T-cell (primary cell): ENCODE measurements at regions of chr19 and their contacts with region 1.

Region 1: DNA sequence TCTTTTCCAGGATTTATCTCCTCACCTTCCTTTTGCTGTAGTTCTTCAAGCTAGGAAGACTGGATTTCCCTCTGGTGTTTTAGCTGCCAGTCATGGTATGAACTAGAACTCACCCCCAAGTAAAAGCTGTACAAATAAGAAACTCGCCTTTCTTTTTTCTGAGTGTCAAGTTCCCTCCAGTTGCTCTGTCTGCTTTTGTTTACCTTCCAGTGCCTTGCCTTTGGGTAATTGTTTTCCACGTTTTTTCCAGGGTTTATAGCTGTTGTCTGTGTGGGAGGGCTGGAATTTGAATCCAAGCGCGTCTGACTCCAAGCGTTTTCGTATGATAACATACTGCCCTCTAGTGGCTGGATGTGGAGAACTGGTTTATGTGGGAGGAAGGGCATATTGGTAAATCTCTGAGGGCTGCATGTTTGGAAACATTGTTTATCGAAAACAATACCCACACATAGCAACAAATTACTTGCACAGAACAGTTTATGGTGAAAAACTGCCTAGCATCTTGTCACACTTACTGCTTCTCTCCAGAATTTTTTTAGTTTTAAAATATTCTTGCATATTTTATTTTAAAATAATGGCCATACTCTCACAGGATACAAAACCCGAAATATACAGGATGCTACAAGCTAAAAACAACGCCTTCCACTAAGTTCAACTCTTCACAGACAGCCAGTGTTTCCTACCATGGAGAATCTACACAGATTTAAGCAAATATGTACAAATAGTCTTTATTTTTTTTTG is 19.2 kb downstream of the RCN3 start:
- DNase-seq: peak in 24 of 35 experiments; percentile 34 to 91 (median 56)
- ATAC-seq: peak; percentile 68 to 79 (median 71)
- H3K4me3 ChIP-seq: peak overlapping the region; percentile 20 to 51
- H3K4me3 Mint-ChIP-seq: peak overlapping the region; percentile 62 to 78 (median 69)
- H3K27ac ChIP-seq: peak overlapping the region; percentile 6
- H3K27ac Mint-ChIP-seq: peak overlapping the region; percentile 82 to 86
- H3K4me1 ChIP-seq: peaks cover 34 to 62% of the 10 kb centered on the region in 2 experiments
- H3K4me1 Mint-ChIP-seq: peaks cover 42 to 54% (median 45%) of the 10 kb centered on the region in 3 donors
- H3K27me3 ChIP-seq: no peaks in the 10 kb centered on the region
- H3K27me3 Mint-ChIP-seq: no peaks in the 10 kb centered on the region

Region 2: GRCh38 chr19:49430678-49431329 is 116.2 kb before region 1 on chr19:
- CTCF ChIA-PET with region 1: interaction called, 3 to 10 read pairs
- POLR2A ChIA-PET with region 1: no interaction called
- DNase-seq: peak in 1 of 35 experiments; percentile 48
- ATAC-seq: peak in 1 of 4 experiments; percentile 37
- H3K4me3 ChIP-seq: no peak overlapping the region
- H3K4me3 Mint-ChIP-seq: no peak overlapping the region
- H3K27ac ChIP-seq: no peak overlapping the region
- H3K27ac Mint-ChIP-seq: peak overlapping the region in 1 of 2 donors; percentile 52
- H3K4me1 ChIP-seq: peaks cover 7 to 59% of the 10 kb centered on the region in 2 experiments
- H3K4me1 Mint-ChIP-seq: peaks cover 39 to 52% (median 48%) of the 10 kb centered on the region in 3 donors
- H3K27me3 ChIP-seq: peaks cover 13 to 100% of the 10 kb centered on the region in 2 experiments
- H3K27me3 Mint-ChIP-seq: peaks cover 71 to 92% of the 10 kb centered on the region in 2 donors

Region 3: GRCh38 chr19:49502866-49503581 is 44.0 kb before region 1 on chr19:
- CTCF ChIA-PET with region 1: interaction called, 7 to 14 read pairs
- POLR2A ChIA-PET with region 1: interaction called in 1 of 2 experiments, 3 read pairs
- DNase-seq: peak in 23 of 35 experiments; percentile 29 to 79 (median 48)
- ATAC-seq: no peak
- H3K4me3 ChIP-seq: no peak overlapping the region
- H3K4me3 Mint-ChIP-seq: peak overlapping the region in 1 of 3 donors; percentile 39
- H3K27ac ChIP-seq: peak overlapping the region; percentile 92
- H3K27ac Mint-ChIP-seq: peak overlapping the region; percentile 75 to 93
- H3K4me1 ChIP-seq: peaks cover 16 to 60% of the 10 kb centered on the region in 2 experiments
- H3K4me1 Mint-ChIP-seq: peaks cover 43 to 63% (median 50%) of the 10 kb centered on the region in 3 donors
- H3K27me3 ChIP-seq: no peaks in the 10 kb centered on the region
- H3K27me3 Mint-ChIP-seq: no peaks in the 10 kb centered on the region

Region 4: DNA sequence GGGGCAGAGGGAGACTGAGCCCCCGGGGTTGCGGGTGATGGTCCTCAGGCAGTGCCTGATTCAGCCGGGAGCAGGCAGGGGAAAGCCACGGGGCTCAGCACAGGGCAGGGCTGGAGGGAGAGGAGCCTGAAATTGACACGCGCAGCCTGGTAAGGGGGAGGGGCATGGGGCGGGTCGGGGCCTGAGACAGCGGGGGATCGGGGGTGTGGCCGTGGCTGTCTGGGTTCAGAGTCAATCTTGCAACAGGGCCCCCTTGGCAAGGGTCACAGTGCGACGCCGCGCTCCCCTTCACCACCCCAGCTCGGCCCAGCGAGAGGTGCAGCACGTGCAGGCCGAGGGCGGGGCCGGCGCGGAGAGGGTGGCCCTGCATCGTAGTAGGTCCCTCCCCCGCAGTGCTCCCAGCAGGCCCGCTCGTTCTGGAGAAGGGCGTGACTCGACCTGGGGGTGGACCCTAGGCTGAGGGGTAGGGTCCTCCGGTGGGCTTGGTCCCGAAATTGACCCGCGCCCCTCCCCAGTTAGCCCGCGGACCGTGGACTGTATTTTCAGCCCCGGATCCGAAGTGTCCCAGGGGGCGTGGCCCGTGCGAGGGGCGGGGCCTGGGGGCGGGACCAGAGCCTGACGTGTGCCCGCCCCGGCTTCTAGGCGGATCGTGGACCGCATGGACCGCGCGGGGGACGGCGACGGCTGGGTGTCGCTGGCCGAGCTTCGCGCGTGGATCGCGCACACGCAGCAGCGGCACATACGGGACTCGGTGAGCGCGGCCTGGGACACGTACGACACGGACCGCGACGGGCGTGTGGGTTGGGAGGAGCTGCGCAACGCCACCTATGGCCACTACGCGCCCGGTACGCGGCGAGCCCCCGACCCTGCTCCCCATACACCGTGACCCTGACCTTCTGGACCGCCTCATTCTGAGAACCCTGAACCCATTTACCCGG is 13.2 kb before region 1 on chr19:
- CTCF ChIA-PET with region 1: interaction called, 9 to 15 read pairs
- POLR2A ChIA-PET with region 1: interaction called, 4 to 7 read pairs
- DNase-seq: peak; percentile 60 to 91 (median 79)
- ATAC-seq: peak; percentile 90 to 93 (median 92)
- H3K4me3 ChIP-seq: peak overlapping the region; percentile 72 to 78
- H3K4me3 Mint-ChIP-seq: peak overlapping the region; percentile 76 to 83 (median 81)
- H3K27ac ChIP-seq: no peak overlapping the region
- H3K27ac Mint-ChIP-seq: peak overlapping the region; percentile 78 to 79
- H3K4me1 ChIP-seq: peaks cover 12 to 27% of the 10 kb centered on the region in 2 experiments
- H3K4me1 Mint-ChIP-seq: peaks cover 20 to 28% (median 26%) of the 10 kb centered on the region in 3 donors
- H3K27me3 ChIP-seq: peaks cover 0 to 2% of the 10 kb centered on the region in 2 experiments
- H3K27me3 Mint-ChIP-seq: no peaks in the 10 kb centered on the region

Region 5: GRCh38 chr19:49570138-49570856 is 23.3 kb after region 1 on chr19:
- CTCF ChIA-PET with region 1: interaction called, 11 to 40 read pairs
- POLR2A ChIA-PET with region 1: interaction called, 4 to 11 read pairs
- DNase-seq: peak in 32 of 35 experiments; percentile 51 to 95 (median 72)
- ATAC-seq: peak; percentile 10 to 46 (median 22)
- H3K4me3 ChIP-seq: no peak overlapping the region
- H3K4me3 Mint-ChIP-seq: peak overlapping the region in 1 of 3 donors; percentile 77
- H3K27ac ChIP-seq: peak overlapping the region; percentile 79
- H3K27ac Mint-ChIP-seq: peak overlapping the region; percentile 87
- H3K4me1 ChIP-seq: peaks cover 36 to 67% of the 10 kb centered on the region in 2 experiments
- H3K4me1 Mint-ChIP-seq: peaks cover 60 to 66% (median 60%) of the 10 kb centered on the region in 3 donors
- H3K27me3 ChIP-seq: no peaks in the 10 kb centered on the region
- H3K27me3 Mint-ChIP-seq: no peaks in the 10 kb centered on the region

Region 6: GRCh38 chr19:49590071-49590970 is 43.3 kb after region 1 on chr19:
- CTCF ChIA-PET with region 1: interaction called in 1 of 2 experiments, 4 read pairs
- POLR2A ChIA-PET with region 1: interaction called, 3 to 12 read pairs
- DNase-seq: peak; percentile 89 to 97 (median 94)
- ATAC-seq: peak; percentile 76 to 77 (median 77)
- H3K4me3 ChIP-seq: peak overlapping the region; percentile 98 to 99
- H3K4me3 Mint-ChIP-seq: peak overlapping the region; percentile 88 to 94 (median 91)
- H3K27ac ChIP-seq: peak overlapping the region; percentile 86
- H3K27ac Mint-ChIP-seq: peak overlapping the region; percentile 88 to 94
- H3K4me1 ChIP-seq: peaks cover 7 to 50% of the 10 kb centered on the region in 2 experiments
- H3K4me1 Mint-ChIP-seq: peaks cover 24 to 47% (median 38%) of the 10 kb centered on the region in 3 donors
- H3K27me3 ChIP-seq: no peaks in the 10 kb centered on the region
- H3K27me3 Mint-ChIP-seq: no peaks in the 10 kb centered on the region

Region 7: GRCh38 chr19:50476224-50476942 is 929.4 kb after region 1 on chr19 and contains the starts of genes EMC10 and GARIN5A:
- CTCF ChIA-PET with region 1: no interaction called
- POLR2A ChIA-PET with region 1: interaction called in 1 of 2 experiments, 10 read pairs
- DNase-seq: peak; percentile 81 to 97 (median 93)
- ATAC-seq: peak; percentile 92 to 94 (median 93)
- H3K4me3 ChIP-seq: peak within 1 kb of the TSS; percentile 82 to 100
- H3K4me3 Mint-ChIP-seq: peak within 1 kb of the TSS; percentile 95 to 98 (median 98)
- H3K27ac ChIP-seq: peak within 1 kb of the TSS; percentile 84
- H3K27ac Mint-ChIP-seq: peak within 1 kb of the TSS; percentile 84 to 93
- H3K4me1 ChIP-seq: peaks cover 9 to 43% of the 10 kb centered on the region in 2 experiments
- H3K4me1 Mint-ChIP-seq: peaks cover 21 to 36% (median 27%) of the 10 kb centered on the region in 3 donors
- H3K27me3 ChIP-seq: peaks cover 0 to 4% of the 10 kb centered on the region in 2 experiments
- H3K27me3 Mint-ChIP-seq: peaks cover 0 to 1% of the 10 kb centered on the region in 2 donors
- total RNA-seq, gene EMC10: 83.7 to 98.1 (median 89.7) TPM
- total RNA-seq, gene GARIN5A: 0.60 to 1.2 (median 0.67) TPM in 4 of 5 donors, not detected in the other